Pancreas (tissue), 10 donors: ENCODE measurements at regions of chr1 and their contacts with region 1.

Region 1: GRCh38 chr1:9196129-9197040 is 38.2 kb upstream of the H6PD start:
- DNase-seq: peak in 5 of 6 donors; percentile 42 to 73 (median 59)
- ATAC-seq: peak; percentile 62 to 90 (median 84)
- H3K4me3 ChIP-seq: no peak overlapping the region
- H3K27ac ChIP-seq: no peak overlapping the region
- H3K4me1 ChIP-seq: no peaks in the 10 kb centered on the region
- H3K27me3 ChIP-seq: peaks cover 0 to 3% (median 0%) of the 10 kb centered on the region in 4 donors
- CTCF ChIP-seq: peak; percentile 24 to 73 (median 59)

Region 2: DNA sequence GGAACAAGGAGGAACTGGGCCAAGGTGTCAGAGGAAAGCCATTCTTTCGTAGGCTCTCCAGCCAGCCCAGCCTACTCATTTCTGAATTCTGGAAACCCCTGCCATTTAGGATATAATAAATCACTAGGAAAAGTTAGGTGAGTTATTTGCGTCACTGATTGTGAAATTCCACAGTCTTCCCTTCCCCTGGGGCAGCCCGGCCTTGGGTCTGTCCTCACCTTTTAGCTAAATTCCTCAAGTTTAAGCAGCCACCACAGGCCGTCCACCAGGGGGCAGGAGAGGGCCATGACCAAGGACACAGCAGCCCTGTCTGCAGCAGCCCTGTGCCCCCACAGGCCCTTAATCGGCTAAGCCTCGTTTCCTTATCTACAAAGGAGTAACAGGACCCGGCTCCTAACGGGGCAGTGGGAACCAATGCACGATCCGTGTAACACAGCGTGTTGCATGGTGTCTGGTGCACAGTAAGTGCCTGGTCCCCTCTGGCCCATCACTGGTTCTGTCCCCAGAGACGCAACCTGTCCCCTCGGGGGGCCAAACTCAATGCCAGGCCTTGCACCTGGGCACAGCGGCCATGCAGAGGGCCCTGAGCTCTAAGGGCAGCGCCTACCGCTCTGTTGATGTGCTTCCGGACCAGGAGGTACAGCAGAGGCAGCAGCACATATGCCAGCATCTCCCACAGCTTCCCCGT is 85.6 kb before region 1 on chr1:
- intact Hi-C with region 1: loop called in 2 of 3 experiments (anchors 5 kb)
- DNase-seq: peak; percentile 86 to 98 (median 94)
- ATAC-seq: peak; percentile 90 to 97 (median 95)
- H3K4me3 ChIP-seq: no peak overlapping the region
- H3K27ac ChIP-seq: peak overlapping the region in 1 of 4 donors; percentile 64
- H3K4me1 ChIP-seq: no peaks in the 10 kb centered on the region
- H3K27me3 ChIP-seq: no peaks in the 10 kb centered on the region
- CTCF ChIP-seq: peak; percentile 82 to 91 (median 88)

Region 3: DNA sequence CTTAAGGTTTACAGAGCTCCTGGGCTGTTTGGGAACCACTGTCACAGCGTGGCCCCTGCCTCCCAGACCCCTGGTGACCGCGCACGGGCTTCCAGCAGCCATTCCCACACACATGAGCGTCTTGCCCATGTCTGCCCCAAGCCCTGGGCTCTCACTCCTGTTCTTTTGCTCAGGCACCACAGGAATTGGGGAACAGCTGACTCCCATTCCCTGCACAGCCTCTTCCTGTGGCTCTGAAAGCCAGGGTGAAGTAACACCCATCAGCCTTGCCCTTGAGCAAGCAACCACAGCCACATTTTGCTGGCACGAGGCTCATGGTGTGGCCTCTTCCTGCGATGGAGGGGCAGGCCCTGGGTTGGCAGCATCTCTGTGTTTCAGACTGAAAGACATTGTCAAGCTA is 53.1 kb before region 1 on chr1:
- intact Hi-C with region 1: loop called in 1 of 3 experiments (anchors 5 kb)
- DNase-seq: peak in 1 of 6 donors; percentile 24
- ATAC-seq: peak; percentile 32 to 66 (median 38)
- H3K4me3 ChIP-seq: no peak overlapping the region
- H3K27ac ChIP-seq: no peak overlapping the region
- H3K4me1 ChIP-seq: no peaks in the 10 kb centered on the region
- H3K27me3 ChIP-seq: no peaks in the 10 kb centered on the region
- CTCF ChIP-seq: no peak